Calu3 (cell line): ENCODE measurements at regions of chr5 and their contacts with region 1.

Region 1: GRCh38 chr5:108900668-108901067 is 153.0 kb downstream of the FER start:
- DNase-seq: no peak
- H3K4me3 Mint-ChIP-seq: no peak overlapping the region
- H3K27ac Mint-ChIP-seq: peak overlapping the region; percentile 7
- H3K4me1 Mint-ChIP-seq: peaks cover 24% of the 10 kb centered on the region
- H3K27me3 Mint-ChIP-seq: no peaks in the 10 kb centered on the region
- CTCF ChIP-seq: no peak

Region 2: DNA sequence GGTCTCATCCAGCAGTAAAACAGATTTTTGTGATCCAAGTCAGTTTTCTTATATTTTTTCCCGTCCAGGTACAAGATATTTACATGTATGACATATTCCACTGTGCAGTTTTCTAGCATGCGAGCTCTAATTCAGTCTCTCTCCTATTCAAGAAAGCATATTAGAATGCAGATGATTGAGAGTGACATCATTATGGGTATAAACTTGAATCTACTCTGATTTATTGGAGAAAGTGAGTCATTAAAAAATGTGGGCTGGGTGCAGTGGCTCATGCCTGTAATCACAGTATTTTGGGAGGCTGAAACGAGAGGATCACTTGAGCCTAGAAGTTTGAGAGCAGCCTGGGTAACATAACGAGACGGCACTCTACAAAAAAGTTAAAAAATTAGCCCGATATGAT is 146.8 kb before region 1 on chr5:
- CTCF ChIA-PET with region 1: no interaction called
- intact Hi-C with region 1: loop called (anchors 5 kb)
- DNase-seq: no peak
- H3K4me3 Mint-ChIP-seq: no peak overlapping the region
- H3K27ac Mint-ChIP-seq: peak overlapping the region; percentile 84
- H3K4me1 Mint-ChIP-seq: peaks cover 24% of the 10 kb centered on the region
- H3K27me3 Mint-ChIP-seq: no peaks in the 10 kb centered on the region
- CTCF ChIP-seq: no peak

Region 3: DNA sequence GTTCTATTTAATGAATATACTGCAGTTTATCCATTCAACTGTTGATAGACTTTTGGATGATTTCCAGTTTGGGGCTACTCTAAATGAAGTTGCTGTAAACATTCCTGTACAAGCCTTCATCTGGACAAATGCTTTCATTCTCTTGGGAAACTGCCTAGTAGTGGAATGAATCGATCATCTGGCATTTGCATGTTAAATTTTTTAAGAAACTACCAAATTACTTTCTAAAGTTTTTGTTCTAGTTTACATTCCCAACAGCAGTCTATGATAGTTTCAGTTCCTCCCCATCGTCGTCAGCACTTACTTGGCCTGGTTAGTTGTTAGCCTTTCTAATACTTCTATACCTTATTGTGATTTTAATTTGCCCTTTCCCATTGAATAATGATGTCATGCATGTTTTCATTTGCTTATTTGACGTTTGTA is 153.3 kb after region 1 on chr5:
- CTCF ChIA-PET with region 1: no interaction called
- intact Hi-C with region 1: no loop called
- DNase-seq: no peak
- H3K4me3 Mint-ChIP-seq: no peak overlapping the region
- H3K27ac Mint-ChIP-seq: no peak overlapping the region
- H3K4me1 Mint-ChIP-seq: no peaks in the 10 kb centered on the region
- H3K27me3 Mint-ChIP-seq: no peaks in the 10 kb centered on the region
- CTCF ChIP-seq: no peak